HEK293T (cell line): ENCODE measurements at regions of chr2 and their contacts with region 1.

Region 1: GRCh38 chr2:102240640-102241370 is 54.0 kb downstream of the IL1RL2 start:
- DNase-seq: peak; percentile 83

Region 2: GRCh38 chr2:102206666-102207341 is 34.0 kb before region 1 on chr2:
- CTCF ChIA-PET with region 1: no interaction called
- POLR2A ChIA-PET with region 1: no interaction called
- DNase-seq: no peak

Region 3: DNA sequence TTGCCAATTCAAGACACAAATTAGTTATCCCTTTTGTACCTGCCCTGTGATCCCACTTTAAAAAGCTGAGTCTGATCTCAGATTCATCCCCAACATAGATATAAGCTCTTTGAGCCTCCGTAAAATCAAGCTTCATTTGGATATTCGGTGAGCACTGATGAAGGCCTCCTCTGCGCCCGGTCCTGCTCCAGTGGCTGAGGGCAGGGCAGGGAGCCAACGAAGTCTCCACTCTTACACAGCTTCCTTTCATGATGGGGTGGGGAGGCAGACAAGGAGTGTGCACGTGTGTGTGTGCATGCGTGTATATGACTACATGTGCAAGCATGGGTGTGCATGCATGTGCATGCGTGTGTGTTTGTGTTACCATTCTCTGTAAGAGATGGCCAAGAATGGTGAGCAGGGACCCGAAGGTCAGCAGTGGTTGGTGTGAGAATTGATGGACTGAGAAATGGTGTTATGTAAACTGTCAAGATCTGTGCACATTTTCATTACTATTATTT is 10.3 kb before region 1 on chr2:
- CTCF ChIA-PET with region 1: interaction called, 10 read pairs
- POLR2A ChIA-PET with region 1: no interaction called
- DNase-seq: no peak

Region 4: DNA sequence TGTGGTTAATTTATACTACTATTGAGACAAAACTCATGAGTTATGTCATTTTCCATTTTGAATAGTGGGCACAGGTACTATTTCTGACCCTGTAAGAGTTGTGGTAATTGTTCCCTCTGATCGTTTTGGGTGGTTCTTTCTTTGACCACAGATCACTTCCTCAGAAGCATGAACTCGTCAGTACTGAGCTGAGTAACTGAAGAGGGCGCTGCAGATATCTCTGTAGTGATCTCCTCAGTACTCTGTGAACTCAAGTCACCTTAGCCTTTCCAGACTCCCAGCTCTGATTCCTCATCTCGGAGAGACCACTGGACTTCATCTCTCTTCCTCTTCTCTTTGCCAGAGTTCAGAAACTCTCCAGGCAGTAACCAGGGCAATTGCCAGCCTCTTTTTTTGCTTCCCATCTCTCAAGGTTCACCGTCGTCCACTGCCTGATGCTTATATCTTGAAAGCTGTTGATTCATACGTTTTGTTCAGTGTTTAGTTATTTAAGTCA is 61.1 kb after region 1 on chr2:
- CTCF ChIA-PET with region 1: no interaction called
- POLR2A ChIA-PET with region 1: no interaction called
- DNase-seq: peak; percentile 22

Region 5: DNA sequence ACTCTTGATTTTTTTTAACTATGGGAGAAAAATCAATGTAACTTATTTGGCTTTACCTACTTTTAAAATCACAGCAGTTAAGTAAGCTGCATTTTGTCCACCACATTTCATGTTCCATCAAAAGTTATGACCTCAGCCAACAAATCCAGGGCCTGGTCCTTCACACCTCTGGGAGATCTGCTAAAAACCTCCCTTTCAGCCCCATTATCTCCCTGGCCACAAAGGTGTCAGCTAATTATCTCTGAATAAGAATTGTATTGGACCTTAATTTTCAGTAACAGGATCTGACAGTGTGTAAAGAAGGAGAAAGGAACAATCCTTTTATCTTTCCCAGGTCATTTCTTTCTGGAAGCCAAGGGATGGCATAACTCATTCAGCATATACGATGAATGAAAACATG is 880.3 kb after region 1 on chr2:
- CTCF ChIA-PET with region 1: no interaction called
- POLR2A ChIA-PET with region 1: no interaction called
- DNase-seq: no peak